GM13976 (cell line): ENCODE measurements at regions of chr7 and their contacts with region 1.

Region 1: DNA sequence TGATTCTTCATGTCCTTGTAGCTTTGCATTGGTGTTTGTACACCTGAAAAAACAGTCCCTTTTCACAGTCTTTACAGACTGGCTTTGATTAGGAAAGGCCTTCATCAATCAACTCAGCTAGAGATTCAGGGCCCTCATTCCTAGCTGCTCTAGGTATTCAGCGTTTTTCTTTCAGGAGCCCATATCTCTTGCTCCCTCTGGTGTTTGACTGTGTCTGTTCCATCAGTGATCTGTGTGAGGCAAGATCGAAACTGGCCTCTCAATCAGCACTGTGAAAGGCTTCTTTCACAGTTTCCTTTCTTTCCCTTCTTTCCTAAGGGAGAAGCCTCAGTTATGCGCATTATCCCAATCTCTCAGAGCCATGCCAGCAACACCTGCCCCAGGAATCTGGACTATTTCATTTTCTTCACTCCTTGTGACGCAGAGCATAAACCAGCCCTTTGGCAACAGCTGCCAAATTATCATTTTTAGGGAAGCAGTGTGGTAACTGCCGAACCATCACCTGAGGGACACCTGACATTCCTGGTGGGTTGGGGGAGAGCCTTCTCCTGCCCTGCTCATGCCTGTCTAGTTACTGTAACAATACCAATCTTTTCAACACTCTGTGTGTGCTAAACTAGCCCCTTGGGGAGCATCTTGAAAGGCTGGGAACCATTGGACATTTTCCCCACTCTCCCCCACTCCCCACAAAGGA is 75.7 kb upstream of the CCDC71L start:
- DNase-seq: peak; percentile 41
- CTCF ChIP-seq: peak; percentile 62

Region 2: GRCh38 chr7:106176414-106177299 is 560.0 kb before region 1 on chr7:
- in situ Hi-C with region 1: loop called (anchors 25 kb)
- DNase-seq: peak; percentile 71
- CTCF ChIP-seq: peak; percentile 97

Region 3: GRCh38 chr7:106542550-106543220 is 194.0 kb before region 1 on chr7:
- in situ Hi-C with region 1: loop called (anchors 10 kb)
- DNase-seq: peak; percentile 65
- CTCF ChIP-seq: peak; percentile 66

Region 4: GRCh38 chr7:107150375-107151073 is 413.9 kb after region 1 on chr7:
- in situ Hi-C with region 1: no loop called
- DNase-seq: peak; percentile 37
- CTCF ChIP-seq: peak; percentile 51